Activated CD4-positive, alpha-beta T cell treated with anti-CD3 and anti-CD28 coated beads, Interleukin-2, amount 10 ng/mL, durations not matched to agents 7 days and 5 days (primary cell): ENCODE measurements at regions of chr1 and their contacts with region 1.

Region 1: GRCh38 chr1:198187973-198188588 is 31.3 kb downstream of the NEK7 start:
- DNase-seq: peak; percentile 19
- H3K4me3 Mint-ChIP-seq: peak overlapping the region; percentile 9
- H3K27ac Mint-ChIP-seq: peak overlapping the region; percentile 74
- H3K4me1 Mint-ChIP-seq: peaks cover 69% of the 10 kb centered on the region
- H3K27me3 Mint-ChIP-seq: no peaks in the 10 kb centered on the region

Region 2: DNA sequence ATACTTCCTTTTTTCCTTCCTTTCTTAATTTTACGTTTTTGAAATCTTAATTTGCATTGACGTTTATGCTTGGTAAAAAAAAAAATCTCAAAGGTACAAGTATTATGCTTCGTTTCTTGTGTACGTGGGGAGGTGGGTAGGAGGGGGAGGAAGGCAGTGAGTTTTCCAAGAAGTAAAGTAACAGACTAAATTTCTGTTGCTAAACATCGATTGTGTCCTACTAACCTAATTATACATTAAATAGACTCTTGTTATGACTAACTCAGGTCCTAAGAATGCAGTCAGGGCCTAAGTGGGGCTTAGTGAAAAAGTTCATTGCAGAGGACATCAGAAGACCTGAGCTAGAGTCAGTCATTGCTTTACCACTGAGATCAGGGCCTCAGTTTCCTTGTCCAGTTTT is 13.8 kb before region 1 on chr1:
- CTCF ChIA-PET with region 1: interaction called, 10 read pairs
- POLR2A ChIA-PET with region 1: no interaction called
- DNase-seq: no peak
- H3K4me3 Mint-ChIP-seq: peak overlapping the region; percentile 22
- H3K27ac Mint-ChIP-seq: peak overlapping the region; percentile 81
- H3K4me1 Mint-ChIP-seq: peaks cover 86% of the 10 kb centered on the region
- H3K27me3 Mint-ChIP-seq: no peaks in the 10 kb centered on the region